OCI-LY7 (cell line): ENCODE measurements at regions of chr21 and their contacts with region 1.

Region 1: DNA sequence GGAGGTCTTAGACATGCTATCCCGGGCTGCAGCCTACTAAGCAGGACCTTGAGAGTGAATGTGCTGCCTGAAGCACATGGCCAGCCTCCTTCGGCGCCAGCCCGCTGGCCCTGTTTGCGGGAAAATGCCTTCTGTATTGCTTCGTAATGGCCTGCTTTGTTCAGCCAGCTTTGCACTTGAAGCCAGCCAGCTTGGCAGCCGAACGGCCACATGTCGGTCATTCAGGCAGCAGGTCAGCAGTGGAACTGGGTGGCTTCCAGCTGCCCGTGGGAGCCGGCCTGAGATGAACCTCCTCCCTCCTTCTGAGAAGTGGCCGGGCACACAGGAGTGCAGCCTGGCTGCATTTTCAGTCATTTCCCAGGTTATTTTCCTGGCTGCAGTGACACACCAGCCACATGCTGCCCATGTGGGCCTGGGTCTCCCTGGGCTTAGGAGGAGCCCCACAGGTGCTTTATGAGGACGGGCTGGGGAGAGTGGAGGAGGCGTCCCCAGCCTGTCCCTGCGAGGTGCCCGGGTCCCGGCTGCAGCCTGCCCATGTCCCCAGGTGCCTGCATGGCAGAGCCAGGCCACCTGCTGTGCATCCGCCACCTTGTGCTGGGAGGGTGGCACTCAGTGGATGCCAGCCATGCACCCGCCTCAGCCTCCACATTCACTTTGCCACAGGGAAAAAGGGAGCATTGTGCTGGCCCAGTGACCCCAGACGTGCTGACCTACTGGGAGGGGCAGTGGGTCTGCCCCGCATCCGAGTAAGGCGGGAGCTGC is 103.5 kb downstream of the SIK1 start:
- DNase-seq: no peak
- H3K4me3 ChIP-seq: no peak overlapping the region
- H3K27ac ChIP-seq: no peak overlapping the region
- H3K4me1 ChIP-seq: peaks cover 21% of the 10 kb centered on the region
- CTCF ChIP-seq: no peak

Region 2: GRCh38 chr21:43352568-43353281 is 29.3 kb after region 1 on chr21:
- CTCF ChIA-PET with region 1: no interaction called
- POLR2A ChIA-PET with region 1: no interaction called
- intact Hi-C with region 1: loop called (anchors 2 kb)
- DNase-seq: peak; percentile 95
- H3K4me3 ChIP-seq: peak overlapping the region; percentile 55
- H3K27ac ChIP-seq: peak overlapping the region; percentile 91
- H3K4me1 ChIP-seq: peaks cover 48% of the 10 kb centered on the region
- CTCF ChIP-seq: no peak